Activated CD8-positive, alpha-beta T cell treated with anti-CD3 and anti-CD28 coated beads for 36 hours (primary cell): ENCODE measurements at regions of chr13 and their contacts with region 1.

Region 1: GRCh38 chr13:21638319-21639282 is 32.3 kb upstream of the FGF9 start:
- DNase-seq: peak; percentile 39
- ATAC-seq: no peak
- H3K4me3 Mint-ChIP-seq: no peak overlapping the region
- H3K27ac Mint-ChIP-seq: no peak overlapping the region
- H3K4me1 Mint-ChIP-seq: no peaks in the 10 kb centered on the region
- H3K27me3 Mint-ChIP-seq: peaks cover 5% of the 10 kb centered on the region
- CTCF ChIP-seq: peak; percentile 85

Region 2: GRCh38 chr13:21465710-21466160 is 172.9 kb before region 1 on chr13:
- CTCF ChIA-PET with region 1: no interaction called
- POLR2A ChIA-PET with region 1: no interaction called
- intact Hi-C with region 1: no loop called
- DNase-seq: no peak
- ATAC-seq: no peak
- H3K4me3 Mint-ChIP-seq: no peak overlapping the region
- H3K27ac Mint-ChIP-seq: no peak overlapping the region
- H3K4me1 Mint-ChIP-seq: no peaks in the 10 kb centered on the region
- H3K27me3 Mint-ChIP-seq: no peaks in the 10 kb centered on the region
- CTCF ChIP-seq: no peak

Region 3: DNA sequence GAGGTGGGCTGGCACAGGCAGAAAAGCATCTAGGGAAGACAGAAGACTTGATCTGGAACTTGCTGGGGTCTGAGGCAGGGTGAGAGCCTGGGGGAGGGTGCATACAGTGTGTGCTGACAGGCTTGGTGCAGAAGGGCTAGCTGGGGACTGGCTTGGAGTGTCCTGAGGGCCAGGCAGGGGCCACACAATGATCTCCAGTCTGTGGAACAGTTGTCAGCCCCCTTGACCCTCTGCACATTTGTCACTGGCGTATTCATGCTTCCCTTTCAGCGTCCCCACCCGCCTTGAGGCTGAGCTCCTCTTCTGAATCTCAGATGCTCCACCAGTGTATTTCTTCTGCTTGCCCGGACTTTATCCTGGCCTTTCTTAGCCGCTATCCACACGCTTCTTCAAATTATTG is 31.8 kb before region 1 on chr13:
- CTCF ChIA-PET with region 1: interaction called, 12 read pairs
- POLR2A ChIA-PET with region 1: no interaction called
- intact Hi-C with region 1: no loop called
- DNase-seq: no peak
- ATAC-seq: no peak
- H3K4me3 Mint-ChIP-seq: no peak overlapping the region
- H3K27ac Mint-ChIP-seq: no peak overlapping the region
- H3K4me1 Mint-ChIP-seq: peaks cover 10% of the 10 kb centered on the region
- H3K27me3 Mint-ChIP-seq: peaks cover 2% of the 10 kb centered on the region
- CTCF ChIP-seq: no peak

Region 4: DNA sequence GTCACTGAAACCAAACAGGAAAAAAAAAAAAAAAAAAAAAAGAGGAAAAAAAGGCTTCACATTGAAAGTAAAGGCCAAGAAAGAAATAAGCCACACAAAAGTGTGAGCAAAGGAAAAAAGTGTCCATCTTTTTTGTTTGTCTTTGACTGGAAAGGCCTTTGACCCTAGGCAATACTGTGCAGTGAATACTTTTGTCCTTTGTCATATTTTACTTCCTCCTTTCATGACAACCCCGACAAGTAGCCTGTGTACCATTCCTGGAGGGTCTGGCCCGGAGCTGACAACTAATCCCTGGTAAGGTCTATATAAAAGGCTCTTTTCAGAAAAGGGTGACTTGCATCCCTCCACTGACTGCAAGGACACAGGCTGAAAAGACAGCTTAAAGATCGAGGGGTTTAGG is 21.7 kb before region 1 on chr13:
- CTCF ChIA-PET with region 1: interaction called, 29 read pairs
- POLR2A ChIA-PET with region 1: no interaction called
- intact Hi-C with region 1: no loop called
- DNase-seq: no peak
- ATAC-seq: no peak
- H3K4me3 Mint-ChIP-seq: no peak overlapping the region
- H3K27ac Mint-ChIP-seq: no peak overlapping the region
- H3K4me1 Mint-ChIP-seq: no peaks in the 10 kb centered on the region
- H3K27me3 Mint-ChIP-seq: peaks cover 18% of the 10 kb centered on the region
- CTCF ChIP-seq: no peak

Region 5: GRCh38 chr13:21625366-21625765 is 13.2 kb before region 1 on chr13:
- CTCF ChIA-PET with region 1: interaction called, 12 read pairs
- POLR2A ChIA-PET with region 1: no interaction called
- intact Hi-C with region 1: no loop called
- DNase-seq: peak; percentile 22
- ATAC-seq: no peak
- H3K4me3 Mint-ChIP-seq: no peak overlapping the region
- H3K27ac Mint-ChIP-seq: no peak overlapping the region
- H3K4me1 Mint-ChIP-seq: no peaks in the 10 kb centered on the region
- H3K27me3 Mint-ChIP-seq: peaks cover 5% of the 10 kb centered on the region
- CTCF ChIP-seq: no peak

Region 6: DNA sequence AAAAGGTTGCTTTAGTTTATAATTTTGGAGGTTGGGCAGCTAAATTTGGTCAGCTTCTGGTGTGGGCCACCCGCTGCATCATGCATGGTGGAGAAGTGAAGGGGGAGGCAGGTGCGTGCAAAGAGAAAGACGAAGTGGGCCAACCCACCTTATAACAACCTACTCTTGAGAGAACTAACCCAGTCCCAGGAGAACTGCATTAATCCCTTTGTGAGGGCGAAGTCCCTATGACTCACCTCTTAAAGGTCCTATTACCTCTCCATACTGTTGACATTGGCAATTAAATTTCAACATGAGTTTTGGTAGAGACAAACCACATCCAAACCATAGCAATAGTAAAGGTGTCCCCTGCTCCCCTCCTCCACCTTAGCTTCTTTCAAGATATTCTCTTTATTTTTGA is 24.6 kb after region 1 on chr13:
- CTCF ChIA-PET with region 1: interaction called, 20 read pairs
- POLR2A ChIA-PET with region 1: no interaction called
- intact Hi-C with region 1: no loop called
- DNase-seq: no peak
- ATAC-seq: no peak
- H3K4me3 Mint-ChIP-seq: no peak overlapping the region
- H3K27ac Mint-ChIP-seq: no peak overlapping the region
- H3K4me1 Mint-ChIP-seq: no peaks in the 10 kb centered on the region
- H3K27me3 Mint-ChIP-seq: peaks cover 24% of the 10 kb centered on the region
- CTCF ChIP-seq: no peak

Region 7: DNA sequence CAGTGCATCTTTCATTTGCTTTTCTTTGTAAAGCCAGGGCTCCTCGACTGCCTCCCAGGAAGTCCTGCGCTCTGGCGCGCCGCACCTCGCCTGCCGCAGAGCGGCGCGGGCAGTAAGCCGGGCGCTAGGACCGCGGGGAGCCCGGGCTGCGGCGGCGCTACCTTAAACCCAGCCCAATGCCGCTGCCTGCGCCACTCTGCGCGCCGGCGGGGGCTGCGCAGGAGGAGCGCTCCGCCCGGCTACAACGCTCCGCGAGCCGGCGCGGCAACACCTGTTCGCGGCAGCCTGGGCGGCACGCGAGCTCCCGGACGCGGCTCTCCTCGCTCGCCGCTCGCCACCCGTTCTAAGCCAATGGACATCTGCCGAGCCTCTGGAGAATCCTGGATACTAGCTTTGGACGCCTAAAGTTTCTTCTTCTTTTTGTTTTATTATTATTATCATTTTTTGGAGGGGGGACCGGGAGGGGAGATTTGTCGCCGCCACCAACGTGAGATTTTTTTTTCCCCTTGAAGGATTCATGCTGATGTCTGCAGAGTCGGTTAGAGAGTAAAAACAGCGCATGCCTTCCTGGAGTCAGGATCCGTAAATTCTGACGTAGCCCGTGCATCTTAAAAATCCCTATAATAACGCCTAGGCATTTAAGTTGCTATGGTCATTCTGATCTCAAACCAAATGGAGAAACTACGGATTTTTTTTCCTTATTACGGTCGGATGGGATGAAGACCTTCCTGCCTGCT is 32.5 kb after region 1 on chr13 and contains the start of gene FGF9:
- CTCF ChIA-PET with region 1: interaction called, 20 read pairs
- POLR2A ChIA-PET with region 1: no interaction called
- intact Hi-C with region 1: no loop called
- DNase-seq: peak; percentile 78
- ATAC-seq: peak; percentile 67
- H3K4me3 Mint-ChIP-seq: peak within 1 kb of the TSS; percentile 81
- H3K27ac Mint-ChIP-seq: peak within 1 kb of the TSS; percentile 63
- H3K4me1 Mint-ChIP-seq: peaks cover 37% of the 10 kb centered on the region
- H3K27me3 Mint-ChIP-seq: peaks cover 41% of the 10 kb centered on the region
- CTCF ChIP-seq: no peak
- total RNA-seq, gene FGF9: 0.11 to 0.45 TPM

Region 8: DNA sequence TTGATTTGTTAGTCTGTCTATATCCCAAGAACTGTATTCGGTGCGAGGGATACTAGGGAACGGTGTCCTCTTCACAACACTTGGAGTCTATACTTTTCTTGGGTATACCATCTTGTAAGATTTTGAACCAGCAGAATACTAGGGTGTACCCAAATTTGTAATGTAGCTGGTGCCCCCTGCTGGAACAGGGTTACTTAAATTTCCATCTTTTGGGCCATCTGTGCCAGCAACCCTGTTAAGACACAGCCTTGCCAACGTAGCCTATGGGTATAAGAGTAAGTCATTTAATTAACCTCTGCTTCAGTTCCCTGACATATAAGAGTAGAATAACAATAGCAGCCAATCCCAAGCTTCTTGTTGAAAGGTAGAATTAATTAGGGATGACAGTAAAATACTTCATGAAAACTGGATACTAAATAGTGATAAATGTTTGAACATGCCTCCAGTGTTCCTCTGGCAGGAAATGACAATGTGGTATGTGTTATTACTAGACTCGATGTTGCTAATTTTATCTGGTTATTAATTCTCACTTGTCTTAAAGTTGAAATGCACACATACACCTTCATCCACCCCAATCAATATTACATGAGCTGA is 639.8 kb after region 1 on chr13:
- CTCF ChIA-PET with region 1: interaction called, 7 read pairs
- POLR2A ChIA-PET with region 1: no interaction called
- intact Hi-C with region 1: loop called (anchors 10 kb)
- DNase-seq: peak; percentile 81
- ATAC-seq: peak; percentile 39
- H3K4me3 Mint-ChIP-seq: no peak overlapping the region
- H3K27ac Mint-ChIP-seq: no peak overlapping the region
- H3K4me1 Mint-ChIP-seq: no peaks in the 10 kb centered on the region
- H3K27me3 Mint-ChIP-seq: no peaks in the 10 kb centered on the region
- CTCF ChIP-seq: peak; percentile 67